PC-3 (cell line): ENCODE measurements at regions of chr1 and their contacts with region 1.

Region 1: DNA sequence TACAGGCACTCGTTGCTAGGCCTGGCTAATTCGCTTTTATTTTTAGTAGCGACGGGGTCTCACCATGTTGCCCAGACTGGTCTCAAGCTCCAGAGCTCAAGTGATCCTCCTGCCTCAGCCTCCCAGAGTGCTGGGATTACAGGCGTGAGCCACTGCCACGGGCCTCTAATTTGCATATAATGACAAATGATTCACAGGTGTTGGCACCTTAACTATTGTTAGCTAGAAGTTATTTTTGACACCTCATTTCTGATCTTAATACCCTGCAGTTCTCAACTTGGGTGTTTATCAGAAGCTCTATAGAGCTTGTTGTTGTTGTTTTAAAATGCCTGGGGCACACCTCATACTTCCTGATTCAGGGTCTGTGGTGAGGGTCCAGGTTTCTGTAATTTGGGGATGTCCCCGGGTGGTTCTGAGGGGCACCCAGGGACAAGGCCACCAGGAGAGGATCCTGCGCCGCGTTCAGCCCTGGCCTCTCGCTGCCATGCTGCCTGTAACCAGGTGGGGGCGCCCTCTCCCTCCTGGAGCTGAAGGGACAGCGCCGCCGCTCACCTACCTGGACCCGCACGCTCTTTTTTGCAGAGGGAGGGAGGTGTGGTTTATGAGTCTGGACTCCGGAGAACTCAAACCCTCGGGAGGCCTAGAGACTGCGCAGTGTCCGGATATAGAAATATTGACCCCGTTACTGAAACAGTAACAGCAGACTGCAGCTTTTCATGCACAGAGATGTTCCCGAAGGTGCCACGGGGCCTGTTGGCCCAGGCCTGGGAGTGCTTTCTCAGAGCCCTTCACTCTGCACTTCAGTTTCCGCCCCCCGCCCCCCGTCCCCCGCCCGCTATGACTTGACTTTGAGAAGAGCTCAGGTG is 23.0 kb upstream of the NEK2 start:
- DNase-seq: peak; percentile 87
- ATAC-seq: peak; percentile 98
- H3K4me3 ChIP-seq: peak overlapping the region; percentile 22; the same call in 1 of the 2 replicates
- H3K27ac ChIP-seq: no peak overlapping the region
- H3K4me1 ChIP-seq: no peaks in the 10 kb centered on the region
- H3K27me3 ChIP-seq: no peaks in the 10 kb centered on the region
- CTCF ChIP-seq: peak; percentile 99

Region 2: GRCh38 chr1:211830330-211831142 is 132.1 kb after region 1 on chr1 and contains the start of gene LPGAT1:
- CTCF ChIA-PET with region 1: interaction called, 4 read pairs
- POLR2A ChIA-PET with region 1: no interaction called
- intact Hi-C with region 1: loop called (anchors 1 kb)
- DNase-seq: peak; percentile 79
- ATAC-seq: peak; percentile 91
- H3K4me3 ChIP-seq: peak within 1 kb of the TSS; percentile 84
- H3K27ac ChIP-seq: no peak within 1 kb of the TSS
- H3K4me1 ChIP-seq: peaks cover 13% of the 10 kb centered on the region; the same call in 1 of the 2 replicates
- H3K27me3 ChIP-seq: no peaks in the 10 kb centered on the region
- CTCF ChIP-seq: peak; percentile 69
- total RNA-seq, gene LPGAT1: 39.8 and 41.7 TPM in 2 replicates

Region 3: GRCh38 chr1:211920141-211920572 is 221.8 kb after region 1 on chr1:
- CTCF ChIA-PET with region 1: no interaction called
- POLR2A ChIA-PET with region 1: interaction called, 31 read pairs
- intact Hi-C with region 1: no loop called
- DNase-seq: peak; percentile 70
- ATAC-seq: peak; percentile 62
- H3K4me3 ChIP-seq: no peak overlapping the region
- H3K27ac ChIP-seq: peak overlapping the region; percentile 17; the same call in 1 of the 2 replicates
- H3K4me1 ChIP-seq: peaks cover 21% of the 10 kb centered on the region
- H3K27me3 ChIP-seq: peaks cover 52% of the 10 kb centered on the region
- CTCF ChIP-seq: no peak

Region 4: GRCh38 chr1:211944733-211945500 is 246.5 kb after region 1 on chr1:
- CTCF ChIA-PET with region 1: interaction called, 10 read pairs
- POLR2A ChIA-PET with region 1: no interaction called
- intact Hi-C with region 1: loop called (anchors 1 kb)
- DNase-seq: peak; percentile 95
- ATAC-seq: peak; percentile 100
- H3K4me3 ChIP-seq: no peak overlapping the region
- H3K27ac ChIP-seq: no peak overlapping the region
- H3K4me1 ChIP-seq: peaks cover 10% of the 10 kb centered on the region
- H3K27me3 ChIP-seq: no peaks in the 10 kb centered on the region
- CTCF ChIP-seq: peak; percentile 99